Left colon (tissue), 2 donors: ENCODE measurements at regions of chr3 and their contacts with region 1.

Region 1: GRCh38 chr3:11335056-11335608 is 62.9 kb downstream of the ATG7 start:
- DNase-seq: no peak
- ATAC-seq: peak; percentile 82

Region 2: DNA sequence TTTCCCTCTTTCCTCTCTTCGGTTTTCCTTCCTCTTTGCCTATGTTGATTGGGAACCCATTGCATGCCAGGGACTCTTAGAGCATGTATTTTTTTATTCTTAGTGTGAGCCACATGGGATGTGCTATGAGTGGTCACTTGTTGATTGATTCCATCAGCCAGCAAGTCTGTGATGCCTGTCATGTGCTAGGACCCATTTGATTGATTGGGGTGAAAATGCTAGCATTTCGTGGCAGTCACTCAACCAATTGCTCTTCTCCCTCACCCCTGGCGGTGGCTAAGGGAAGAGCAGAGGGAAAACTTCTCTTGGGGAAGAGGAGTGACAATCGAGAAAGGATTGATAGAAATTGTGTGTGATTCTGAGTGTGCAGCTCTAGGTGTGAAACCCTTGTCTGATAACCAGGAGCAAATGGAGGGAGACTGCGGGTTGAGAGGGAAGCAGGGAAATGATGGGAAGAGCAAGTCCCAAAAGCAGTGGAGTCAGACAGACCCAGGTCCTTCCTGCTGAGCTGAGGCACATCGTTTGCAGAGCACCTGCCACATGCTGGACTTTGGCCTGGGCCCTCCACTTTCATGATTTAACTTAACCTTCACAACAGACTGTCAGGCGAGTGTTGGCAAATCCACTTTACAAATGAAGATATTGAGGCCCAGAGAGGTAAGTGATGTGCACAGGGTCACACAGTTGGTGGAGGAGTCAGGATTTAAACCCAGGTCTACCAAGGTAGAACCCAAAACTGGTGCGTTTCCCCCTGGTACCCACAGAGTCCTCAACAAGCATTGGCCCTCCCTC is 479.1 kb before region 1 on chr3:
- intact Hi-C with region 1: no loop called
- DNase-seq: no peak
- ATAC-seq: no peak

Region 3: DNA sequence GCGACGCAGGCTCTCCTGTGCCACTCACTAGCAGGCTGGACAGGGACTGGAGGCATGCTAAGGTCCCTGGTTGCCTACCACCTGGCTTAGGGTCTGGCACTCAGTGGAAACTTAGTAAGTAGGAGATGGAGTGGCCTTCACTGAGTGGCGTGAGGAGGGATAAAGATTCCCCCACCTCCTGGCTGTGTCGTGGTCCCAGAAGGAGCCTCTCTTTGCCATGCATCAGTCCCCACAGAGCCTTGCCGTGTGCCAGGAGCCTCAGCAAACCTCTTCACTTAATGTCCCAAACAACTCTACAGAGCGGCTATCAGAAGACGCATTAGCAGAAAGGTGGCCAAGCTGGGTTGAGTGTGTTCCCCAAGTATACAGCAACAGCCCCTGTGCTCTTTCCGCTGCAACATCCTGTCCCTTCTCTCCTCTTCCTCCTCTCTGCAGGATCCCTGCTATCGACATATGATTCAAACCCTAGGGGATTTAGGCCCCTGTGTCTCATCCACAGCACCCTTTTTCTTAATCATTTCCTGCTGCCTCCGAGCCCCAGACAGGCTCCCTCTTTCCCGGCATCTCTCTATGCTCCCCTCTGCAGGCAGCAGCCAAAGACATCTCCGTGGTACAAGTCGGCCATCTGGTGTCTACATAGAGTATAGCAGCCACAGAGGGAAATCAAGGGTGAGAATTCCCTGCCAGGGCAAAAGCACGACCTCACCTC is 275.9 kb before region 1 on chr3:
- intact Hi-C with region 1: loop called in 1 of 2 experiments (anchors 10 kb)
- DNase-seq: peak in 1 of 2 donors; percentile 41
- ATAC-seq: peak; percentile 87

Region 4: GRCh38 chr3:11155341-11156025 is 179.6 kb before region 1 on chr3:
- intact Hi-C with region 1: loop called in 1 of 2 experiments (anchors 10 kb)
- DNase-seq: peak; percentile 58 to 71
- ATAC-seq: peak; percentile 88

Region 5: GRCh38 chr3:11168881-11169805 is 166.0 kb before region 1 on chr3:
- intact Hi-C with region 1: no loop called
- DNase-seq: no peak
- ATAC-seq: no peak

Region 6: GRCh38 chr3:11236595-11237461 is 98.3 kb before region 1 on chr3:
- intact Hi-C with region 1: loop called in 1 of 2 experiments (anchors 10 kb)
- DNase-seq: peak; percentile 67 to 89
- ATAC-seq: peak; percentile 97

Region 7: GRCh38 chr3:12158387-12159226 is 823.5 kb after region 1 on chr3 and contains the start of gene TIMP4:
- intact Hi-C with region 1: no loop called
- DNase-seq: peak; percentile 62 to 69
- ATAC-seq: peak; percentile 89
- total RNA-seq, gene TIMP4: 2.8 to 3.8 TPM